GM13977 (cell line): ENCODE measurements at regions of chr11 and their contacts with region 1.

Region 1: GRCh38 chr11:86802601-86803051 is 2.3 kb downstream of the PRSS23 start:
- DNase-seq: no peak
- CTCF ChIP-seq: peak; percentile 27

Region 2: GRCh38 chr11:86456052-86456939 is 346.3 kb before region 1 on chr11:
- in situ Hi-C with region 1: loop called (anchors 10 kb)
- DNase-seq: peak; percentile 72
- CTCF ChIP-seq: peak; percentile 87

Region 3: GRCh38 chr11:87252869-87253268 is 450.2 kb after region 1 on chr11:
- in situ Hi-C with region 1: no loop called
- DNase-seq: no peak
- CTCF ChIP-seq: no peak